Caco-2 (cell line): ENCODE measurements at regions of chr14 and their contacts with region 1.

Region 1: DNA sequence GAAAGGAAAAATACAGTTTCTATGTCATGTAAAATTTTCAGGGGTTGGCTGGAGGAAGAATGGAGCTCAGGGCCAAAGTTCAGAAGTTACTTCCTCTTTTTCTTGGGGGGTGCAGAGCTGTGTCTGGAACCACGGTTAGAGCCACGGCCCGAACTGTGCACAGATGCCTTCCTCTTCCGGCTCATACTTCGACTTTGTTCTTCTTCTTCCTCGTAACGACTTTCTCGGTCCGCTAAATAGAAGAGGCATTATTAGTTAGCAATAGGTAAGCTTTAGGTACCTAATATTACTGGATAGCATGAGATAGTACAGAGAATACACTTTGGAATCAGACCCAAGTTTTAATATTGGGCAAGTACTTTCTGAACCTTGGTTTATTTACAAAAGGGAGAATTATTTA is 31.2 kb downstream of the SUPT16H start:
- DNase-seq: no peak
- H3K4me3 ChIP-seq: no peak overlapping the region
- H3K4me3 Mint-ChIP-seq: no peak overlapping the region
- H3K27ac Mint-ChIP-seq: no peak overlapping the region
- H3K4me1 ChIP-seq: no peaks in the 10 kb centered on the region
- H3K4me1 Mint-ChIP-seq: no peaks in the 10 kb centered on the region
- H3K27me3 ChIP-seq: no peaks in the 10 kb centered on the region
- H3K27me3 Mint-ChIP-seq: no peaks in the 10 kb centered on the region
- CTCF ChIP-seq: no peak

Region 2: GRCh38 chr14:21226467-21226866 is 126.1 kb before region 1 on chr14:
- CTCF ChIA-PET with region 1: no interaction called
- POLR2A ChIA-PET with region 1: interaction called, 11 read pairs
- intact Hi-C with region 1: no loop called
- DNase-seq: no peak
- H3K4me3 ChIP-seq: no peak overlapping the region
- H3K4me3 Mint-ChIP-seq: no peak overlapping the region
- H3K27ac Mint-ChIP-seq: no peak overlapping the region
- H3K4me1 ChIP-seq: peaks cover 16% of the 10 kb centered on the region
- H3K4me1 Mint-ChIP-seq: peaks cover 18% of the 10 kb centered on the region
- H3K27me3 ChIP-seq: no peaks in the 10 kb centered on the region
- H3K27me3 Mint-ChIP-seq: no peaks in the 10 kb centered on the region
- CTCF ChIP-seq: no peak

Region 3: DNA sequence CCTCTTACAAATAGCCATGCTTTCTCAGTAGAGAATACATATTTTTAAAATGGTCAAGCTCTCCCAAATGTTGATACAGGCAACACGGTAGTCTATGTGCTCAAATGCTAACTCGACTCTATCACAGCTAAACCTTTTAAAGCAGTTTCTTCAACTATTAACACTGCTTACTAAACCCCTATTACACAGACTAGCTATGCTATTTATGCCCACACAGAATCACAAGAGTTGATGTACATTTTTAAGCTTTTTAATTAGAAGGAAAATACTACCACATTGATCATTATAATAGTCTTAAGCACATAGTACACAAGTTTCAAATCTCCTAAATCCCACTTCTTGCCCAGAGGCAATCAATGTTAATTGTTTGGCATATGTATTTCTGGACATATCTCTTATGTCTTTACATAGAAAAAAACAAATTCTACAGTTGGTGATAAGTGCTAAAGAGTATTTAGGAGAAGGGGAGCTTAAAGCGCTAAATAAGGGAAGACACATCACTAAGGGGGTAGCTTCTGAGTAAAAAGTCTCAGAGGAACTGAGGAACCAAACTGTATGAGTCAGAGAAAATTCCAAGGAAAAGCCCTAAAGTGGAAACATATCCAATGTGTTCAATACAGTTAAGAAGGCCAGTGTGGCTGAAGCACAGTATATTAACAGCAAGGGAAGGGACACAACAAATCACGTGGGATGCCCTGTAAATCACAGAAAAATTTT is 97.0 kb before region 1 on chr14:
- CTCF ChIA-PET with region 1: no interaction called
- POLR2A ChIA-PET with region 1: no interaction called
- intact Hi-C with region 1: no loop called
- DNase-seq: no peak
- H3K4me3 ChIP-seq: no peak overlapping the region
- H3K4me3 Mint-ChIP-seq: no peak overlapping the region
- H3K27ac Mint-ChIP-seq: no peak overlapping the region
- H3K4me1 ChIP-seq: 0 out of 2 replicates have a peak, but pooled peaks cover under 1% of the 10 kb centered on the region
- H3K4me1 Mint-ChIP-seq: peaks cover 11% of the 10 kb centered on the region
- H3K27me3 ChIP-seq: no peaks in the 10 kb centered on the region
- H3K27me3 Mint-ChIP-seq: no peaks in the 10 kb centered on the region
- CTCF ChIP-seq: no peak